Right lobe of liver (tissue), 6 donors: ENCODE measurements at regions of chr3 and their contacts with region 1.

Region 1: DNA sequence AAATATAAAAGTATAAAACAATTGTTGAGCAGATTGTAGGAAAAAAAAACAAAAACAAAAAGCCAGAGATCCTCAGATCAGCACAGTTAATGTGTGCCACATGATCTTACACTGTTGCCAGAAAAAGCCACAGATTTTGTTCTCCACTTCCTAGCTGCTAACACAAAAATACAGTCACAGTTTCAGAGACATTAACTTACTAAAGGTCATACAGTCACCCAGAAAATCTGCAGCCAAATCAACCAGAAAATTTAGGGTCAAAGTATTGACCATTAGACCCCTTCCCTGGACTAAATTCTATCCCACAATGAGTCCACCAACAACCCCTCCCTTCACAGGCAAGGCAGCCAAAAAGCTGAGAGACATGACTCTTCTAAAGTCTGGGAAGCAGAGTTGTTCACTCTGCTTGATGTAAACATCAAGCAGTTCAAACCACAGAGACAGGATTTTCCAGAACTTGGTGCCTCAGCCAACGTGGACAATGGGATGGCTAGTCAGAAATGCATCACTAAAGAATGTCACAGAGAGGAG is 59.1 kb downstream of the SST start:
- DNase-seq: no peak
- ATAC-seq: no peak
- H3K4me3 ChIP-seq: no peak overlapping the region
- H3K27ac ChIP-seq: no peak overlapping the region
- H3K4me1 ChIP-seq: no peaks in the 10 kb centered on the region
- H3K27me3 ChIP-seq: no peaks in the 10 kb centered on the region
- CTCF ChIP-seq: no peak
- POLR2A ChIP-seq: no peak

Region 2: GRCh38 chr3:187210545-187211327 is 400.3 kb before region 1 on chr3:
- intact Hi-C with region 1: loop called in 1 of 2 experiments (anchors 10 kb)
- DNase-seq: no peak
- ATAC-seq: peak in 1 of 4 donors; percentile 18
- H3K4me3 ChIP-seq: no peak overlapping the region
- H3K27ac ChIP-seq: peak overlapping the region in 1 of 3 donors; percentile 20
- H3K4me1 ChIP-seq: no peaks in the 10 kb centered on the region
- H3K27me3 ChIP-seq: no peaks in the 10 kb centered on the region
- CTCF ChIP-seq: no peak
- POLR2A ChIP-seq: no peak

Region 3: GRCh38 chr3:187567661-187568121 is 43.4 kb before region 1 on chr3:
- intact Hi-C with region 1: no loop called
- DNase-seq: no peak
- ATAC-seq: no peak
- H3K4me3 ChIP-seq: no peak overlapping the region
- H3K27ac ChIP-seq: no peak overlapping the region
- H3K4me1 ChIP-seq: no peaks in the 10 kb centered on the region
- H3K27me3 ChIP-seq: no peaks in the 10 kb centered on the region
- CTCF ChIP-seq: no peak
- POLR2A ChIP-seq: no peak

Region 4: DNA sequence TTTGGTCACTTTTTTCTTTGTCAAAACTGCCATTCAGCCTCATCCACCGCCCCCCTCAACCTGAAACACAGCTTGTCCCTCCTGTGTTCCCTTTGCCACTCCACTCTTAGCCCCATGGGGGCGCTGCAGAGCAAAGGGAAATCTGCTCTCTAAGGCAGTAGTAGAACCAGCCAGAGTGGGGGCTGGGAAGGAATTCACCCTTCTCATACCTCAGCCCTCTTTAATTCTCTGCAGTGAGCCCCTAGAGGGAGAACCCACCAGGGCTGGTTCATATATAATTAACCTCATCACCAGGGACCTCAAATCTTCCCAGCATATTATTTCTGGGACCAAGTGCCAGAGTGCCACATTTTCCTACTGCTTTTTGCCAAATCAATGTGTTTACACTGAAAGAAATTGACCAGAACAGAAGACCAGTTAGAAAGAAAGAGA is 137.0 kb after region 1 on chr3:
- intact Hi-C with region 1: no loop called
- DNase-seq: peak; percentile 89 to 93 (median 92)
- ATAC-seq: peak; percentile 42 to 69 (median 52)
- H3K4me3 ChIP-seq: no peak overlapping the region
- H3K27ac ChIP-seq: peak overlapping the region in 2 of 3 donors; percentile 99 to 100
- H3K4me1 ChIP-seq: peaks cover 0 to 36% (median 9%) of the 10 kb centered on the region in 4 donors
- H3K27me3 ChIP-seq: no peaks in the 10 kb centered on the region
- CTCF ChIP-seq: peak; percentile 94 to 99 (median 96)
- POLR2A ChIP-seq: no peak

Region 5: GRCh38 chr3:187968883-187969580 is 358.0 kb after region 1 on chr3:
- intact Hi-C with region 1: no loop called
- DNase-seq: peak; percentile 42 to 79 (median 61)
- ATAC-seq: peak; percentile 77 to 88 (median 81)
- H3K4me3 ChIP-seq: no peak overlapping the region
- H3K27ac ChIP-seq: peak overlapping the region in 2 of 3 donors; percentile 27 to 70
- H3K4me1 ChIP-seq: peaks cover 0 to 28% (median 10%) of the 10 kb centered on the region in 4 donors
- H3K27me3 ChIP-seq: no peaks in the 10 kb centered on the region
- CTCF ChIP-seq: no peak
- POLR2A ChIP-seq: no peak